ENCODE measurements at regions of chr3 and their contacts with region 1.

Region 1: GRCh38 chr3:161781391-161781790 is 284.8 kb downstream of the OTOL1 start:
- DNase-seq: no peak
- H3K4me3 ChIP-seq: no peak overlapping the region
- H3K4me3 Mint-ChIP-seq: peak overlapping the region; percentile 54
- H3K27ac Mint-ChIP-seq: no peak overlapping the region
- H3K4me1 ChIP-seq: peaks cover 19% of the 10 kb centered on the region
- H3K4me1 Mint-ChIP-seq: peaks cover 6% of the 10 kb centered on the region
- H3K27me3 ChIP-seq: no peaks in the 10 kb centered on the region
- H3K27me3 Mint-ChIP-seq: no peaks in the 10 kb centered on the region
- CTCF ChIP-seq: no peak

Region 2: GRCh38 chr3:161793194-161793930 is 12.0 kb after region 1 on chr3:
- CTCF ChIA-PET with region 1: no interaction called
- POLR2A ChIA-PET with region 1: no interaction called
- intact Hi-C with region 1: loop called (anchors 1 kb)
- DNase-seq: no peak
- H3K4me3 ChIP-seq: no peak overlapping the region
- H3K4me3 Mint-ChIP-seq: no peak overlapping the region
- H3K27ac Mint-ChIP-seq: no peak overlapping the region
- H3K4me1 ChIP-seq: peaks cover 25% of the 10 kb centered on the region
- H3K4me1 Mint-ChIP-seq: peaks cover 16% of the 10 kb centered on the region
- H3K27me3 ChIP-seq: no peaks in the 10 kb centered on the region
- H3K27me3 Mint-ChIP-seq: no peaks in the 10 kb centered on the region
- CTCF ChIP-seq: no peak

Region 3: DNA sequence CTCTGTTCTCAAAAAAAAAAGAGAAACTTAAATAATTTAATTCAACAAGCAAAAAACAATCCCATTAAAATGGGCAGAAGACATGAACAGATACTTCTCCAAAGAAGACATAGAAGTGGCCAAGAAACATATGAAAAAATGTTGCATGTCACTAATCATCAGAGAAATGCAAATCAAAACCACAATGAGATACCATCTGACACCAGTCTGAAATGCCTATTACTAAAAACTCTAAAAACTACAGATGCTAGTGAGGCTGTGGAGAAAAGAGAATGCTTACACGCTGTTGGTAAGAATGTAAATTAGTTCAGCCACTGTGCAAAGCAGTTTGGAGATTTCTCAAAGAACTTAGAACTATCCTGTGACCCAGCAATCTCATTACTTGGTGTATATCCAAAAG is 98.1 kb after region 1 on chr3:
- CTCF ChIA-PET with region 1: no interaction called
- POLR2A ChIA-PET with region 1: no interaction called
- intact Hi-C with region 1: no loop called
- DNase-seq: no peak
- H3K4me3 ChIP-seq: no peak overlapping the region
- H3K4me3 Mint-ChIP-seq: no peak overlapping the region
- H3K27ac Mint-ChIP-seq: no peak overlapping the region
- H3K4me1 ChIP-seq: peaks cover 2% of the 10 kb centered on the region; the same call in 1 of the 2 replicates
- H3K4me1 Mint-ChIP-seq: no peaks in the 10 kb centered on the region
- H3K27me3 ChIP-seq: no peaks in the 10 kb centered on the region
- H3K27me3 Mint-ChIP-seq: peaks cover 3% of the 10 kb centered on the region
- CTCF ChIP-seq: no peak

Measured in Caco-2 (cell line).